CD4-positive, alpha-beta memory T cell (primary cell): ENCODE measurements at regions of chr15 and their contacts with region 1.

Region 1: GRCh38 chr15:59528965-59529402 is 82.6 kb upstream of the GCNT3 start:
- DNase-seq: peak; percentile 56 to 65 (median 61)
- H3K4me3 ChIP-seq: no peak overlapping the region
- H3K4me3 Mint-ChIP-seq: no peak overlapping the region
- H3K27ac ChIP-seq: no peak overlapping the region
- H3K27ac Mint-ChIP-seq: peak overlapping the region in 1 of 7 donors; percentile 12
- H3K4me1 ChIP-seq: peaks cover 14% of the 10 kb centered on the region
- H3K4me1 Mint-ChIP-seq: peaks cover 9 to 16% (median 13%) of the 10 kb centered on the region in 4 donors
- H3K27me3 ChIP-seq: no peaks in the 10 kb centered on the region
- H3K27me3 Mint-ChIP-seq: peaks cover 0 to 3% of the 10 kb centered on the region in 2 donors

Region 2: DNA sequence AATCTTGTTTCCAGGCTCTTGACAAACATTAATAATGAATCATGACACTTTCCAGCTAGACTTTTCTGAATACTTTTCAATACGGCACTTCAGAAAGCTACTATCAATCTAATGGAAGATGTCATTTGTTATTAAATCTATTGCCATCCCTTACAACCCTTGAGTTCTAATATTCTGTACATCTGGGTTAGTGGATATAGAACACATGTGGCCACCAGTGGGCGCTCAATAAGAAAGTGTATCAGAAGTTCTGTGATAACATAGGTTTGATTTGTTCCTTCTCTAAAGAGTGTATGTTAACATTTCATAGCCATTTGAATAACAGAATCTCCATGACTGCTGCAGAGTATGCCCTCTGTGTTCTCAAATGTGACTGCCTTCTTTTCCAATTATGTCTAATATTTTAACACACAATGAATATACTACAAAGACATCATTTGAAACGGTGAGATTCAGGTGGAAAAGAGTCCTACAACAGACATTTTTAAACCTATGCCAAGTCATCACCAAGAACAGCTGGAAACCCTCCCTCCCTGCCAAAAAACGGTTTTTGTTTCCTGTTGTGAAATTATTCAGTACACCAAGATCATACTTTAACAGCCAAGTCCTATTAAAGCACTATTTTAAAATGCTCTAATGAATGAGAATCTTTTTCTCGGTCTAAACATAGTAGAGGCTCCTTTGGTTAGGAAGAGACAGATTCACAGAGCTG is 1485.6 kb before region 1 on chr15:
- CTCF ChIA-PET with region 1: interaction called, 3 read pairs
- POLR2A ChIA-PET with region 1: no interaction called
- intact Hi-C with region 1: loop called (anchors 1 kb)
- DNase-seq: peak in 2 of 5 donors; percentile 17 to 23
- H3K4me3 ChIP-seq: no peak overlapping the region
- H3K4me3 Mint-ChIP-seq: no peak overlapping the region
- H3K27ac ChIP-seq: no peak overlapping the region
- H3K27ac Mint-ChIP-seq: no peak overlapping the region
- H3K4me1 ChIP-seq: no peaks in the 10 kb centered on the region
- H3K4me1 Mint-ChIP-seq: no peaks in the 10 kb centered on the region
- H3K27me3 ChIP-seq: no peaks in the 10 kb centered on the region
- H3K27me3 Mint-ChIP-seq: peaks cover 19 to 22% of the 10 kb centered on the region in 2 donors

Region 3: DNA sequence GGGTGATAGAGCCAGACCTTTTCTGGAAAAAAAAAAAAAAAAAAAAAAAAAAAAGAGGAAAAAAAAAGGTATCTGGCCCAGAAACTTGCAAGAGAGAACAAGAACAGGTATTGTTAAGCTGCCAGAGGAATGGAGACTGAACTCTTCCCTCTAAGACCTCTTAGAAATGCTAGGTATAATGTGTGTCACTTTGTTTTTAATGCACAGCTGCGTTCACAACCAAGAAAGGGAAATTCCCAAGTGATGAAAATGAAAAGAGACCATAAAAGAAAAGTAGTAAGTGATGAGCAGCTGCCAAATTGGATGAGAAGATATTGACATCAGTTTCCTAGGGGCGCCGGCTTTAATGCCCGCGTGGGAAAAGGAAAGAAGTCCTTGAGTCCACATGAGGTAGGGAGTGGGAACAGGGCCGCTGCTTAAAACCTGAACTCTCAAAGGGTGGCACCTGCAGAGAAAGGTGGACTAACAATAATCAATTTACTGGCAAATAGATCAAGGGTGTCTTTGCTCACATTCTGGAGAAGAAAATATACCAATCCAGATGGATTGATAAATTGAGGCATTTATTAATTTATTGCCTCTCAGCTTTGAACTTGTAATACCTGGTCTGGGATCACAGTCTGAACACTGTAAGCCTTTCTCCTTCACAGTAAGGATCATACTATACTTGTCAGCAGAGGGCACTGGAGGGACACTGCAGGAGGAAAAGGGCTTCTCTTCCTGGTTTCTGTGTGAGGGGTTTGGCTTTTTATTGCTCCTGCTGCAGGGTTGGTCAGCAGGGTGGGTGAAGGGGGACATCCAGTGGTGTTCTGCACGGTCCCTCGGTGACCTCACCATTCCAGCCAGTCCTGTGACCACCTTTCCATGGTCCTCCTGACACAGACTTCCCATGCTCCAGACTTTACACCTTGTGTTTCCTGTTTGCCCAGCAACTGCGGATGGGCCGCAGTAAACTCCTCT is 1259.2 kb before region 1 on chr15:
- CTCF ChIA-PET with region 1: interaction called, 3 read pairs
- POLR2A ChIA-PET with region 1: no interaction called
- intact Hi-C with region 1: loop called (anchors 1 kb)
- DNase-seq: peak in 4 of 5 donors; percentile 19 to 39 (median 27)
- H3K4me3 ChIP-seq: no peak overlapping the region
- H3K4me3 Mint-ChIP-seq: peak overlapping the region in 1 of 8 donors; percentile 21
- H3K27ac ChIP-seq: no peak overlapping the region
- H3K27ac Mint-ChIP-seq: peak overlapping the region in 2 of 7 donors; percentile 49 to 77
- H3K4me1 ChIP-seq: no peaks in the 10 kb centered on the region
- H3K4me1 Mint-ChIP-seq: no peaks in the 10 kb centered on the region
- H3K27me3 ChIP-seq: no peaks in the 10 kb centered on the region
- H3K27me3 Mint-ChIP-seq: peaks cover 0 to 2% of the 10 kb centered on the region in 2 donors

Region 4: DNA sequence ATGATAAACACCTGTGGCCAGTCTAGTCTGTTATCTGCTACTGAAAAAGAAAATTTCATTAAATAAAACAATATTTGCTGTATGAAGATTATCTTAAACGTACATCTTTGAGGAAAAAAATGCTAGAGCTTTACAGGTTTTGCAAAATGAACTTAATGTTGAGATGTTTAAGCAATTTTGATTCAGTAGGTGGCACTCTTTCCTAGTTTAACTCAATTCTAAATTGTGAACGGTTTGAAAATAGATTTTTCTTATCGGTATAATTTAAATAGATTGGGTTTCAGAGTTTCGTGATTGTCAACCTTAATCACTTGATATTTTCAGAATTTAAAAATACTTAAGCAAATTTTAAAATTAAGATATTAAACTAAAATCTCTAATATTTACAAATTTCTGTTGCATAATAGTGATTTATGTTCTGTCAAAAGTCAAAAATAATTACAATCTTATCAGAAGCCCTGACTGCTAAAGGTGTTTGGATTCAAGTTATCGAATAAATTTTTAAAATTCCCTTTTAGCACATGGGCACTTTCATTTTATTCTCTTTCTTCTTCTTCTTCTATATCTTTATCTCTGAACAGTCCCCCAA is 548.5 kb before region 1 on chr15:
- CTCF ChIA-PET with region 1: interaction called, 20 read pairs
- POLR2A ChIA-PET with region 1: no interaction called
- intact Hi-C with region 1: loop called (anchors 1 kb)
- DNase-seq: peak in 4 of 5 donors; percentile 41 to 51 (median 44)
- H3K4me3 ChIP-seq: no peak overlapping the region
- H3K4me3 Mint-ChIP-seq: peak overlapping the region in 2 of 8 donors; percentile 1 to 78
- H3K27ac ChIP-seq: no peak overlapping the region
- H3K27ac Mint-ChIP-seq: peak overlapping the region in 3 of 7 donors; percentile 22 to 68 (median 29)
- H3K4me1 ChIP-seq: peaks cover 30% of the 10 kb centered on the region
- H3K4me1 Mint-ChIP-seq: peaks cover 16 to 28% (median 22%) of the 10 kb centered on the region in 4 donors
- H3K27me3 ChIP-seq: no peaks in the 10 kb centered on the region
- H3K27me3 Mint-ChIP-seq: no peaks in the 10 kb centered on the region

Region 5: GRCh38 chr15:59492389-59493377 is 36.3 kb before region 1 on chr15:
- CTCF ChIA-PET with region 1: interaction called, 41 read pairs
- POLR2A ChIA-PET with region 1: no interaction called
- intact Hi-C with region 1: loop called (anchors 2 kb)
- DNase-seq: peak; percentile 49 to 59 (median 55)
- H3K4me3 ChIP-seq: no peak overlapping the region
- H3K4me3 Mint-ChIP-seq: no peak overlapping the region
- H3K27ac ChIP-seq: no peak overlapping the region
- H3K27ac Mint-ChIP-seq: no peak overlapping the region
- H3K4me1 ChIP-seq: no peaks in the 10 kb centered on the region
- H3K4me1 Mint-ChIP-seq: peaks cover 0 to 5% (median 2%) of the 10 kb centered on the region in 4 donors
- H3K27me3 ChIP-seq: no peaks in the 10 kb centered on the region
- H3K27me3 Mint-ChIP-seq: no peaks in the 10 kb centered on the region

Region 6: GRCh38 chr15:59516655-59517461 is 12.1 kb before region 1 on chr15:
- CTCF ChIA-PET with region 1: interaction called, 72 read pairs
- POLR2A ChIA-PET with region 1: interaction called, 3 read pairs
- intact Hi-C with region 1: no loop called
- DNase-seq: no peak
- H3K4me3 ChIP-seq: no peak overlapping the region
- H3K4me3 Mint-ChIP-seq: no peak overlapping the region
- H3K27ac ChIP-seq: no peak overlapping the region
- H3K27ac Mint-ChIP-seq: peak overlapping the region in 2 of 7 donors; percentile 1 to 73
- H3K4me1 ChIP-seq: no peaks in the 10 kb centered on the region
- H3K4me1 Mint-ChIP-seq: peaks cover 0 to 3% (median 1%) of the 10 kb centered on the region in 4 donors
- H3K27me3 ChIP-seq: no peaks in the 10 kb centered on the region
- H3K27me3 Mint-ChIP-seq: peaks cover 2% of the 10 kb centered on the region in 2 donors